Panc1 (cell line): ENCODE measurements at regions of chr19 and their contacts with region 1.

Region 1: DNA sequence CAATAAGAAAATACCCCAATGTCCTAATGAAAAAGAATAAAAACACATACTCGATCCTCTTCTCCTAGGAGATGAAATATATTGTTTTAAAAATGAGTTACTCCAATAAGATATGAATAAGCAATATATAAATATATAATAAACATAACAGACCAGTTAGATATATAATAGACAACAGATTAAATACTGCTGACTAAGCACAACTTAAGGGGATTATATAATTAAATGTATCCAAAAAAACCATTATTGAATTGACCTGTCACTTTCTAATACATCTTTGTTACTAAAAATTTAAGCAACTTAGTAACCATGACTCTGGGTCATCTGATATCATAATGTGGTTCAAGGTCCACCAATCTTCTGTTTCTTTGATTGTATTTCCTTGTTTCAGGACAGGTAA is 14.0 kb upstream of the ZNF780B start:
- DNase-seq: no peak
- ATAC-seq: no peak
- H3K4me3 ChIP-seq: no peak overlapping the region
- H3K27ac ChIP-seq: no peak overlapping the region
- H3K4me1 ChIP-seq: no peaks in the 10 kb centered on the region
- H3K27me3 ChIP-seq: no peaks in the 10 kb centered on the region
- CTCF ChIP-seq: no peak

Region 2: DNA sequence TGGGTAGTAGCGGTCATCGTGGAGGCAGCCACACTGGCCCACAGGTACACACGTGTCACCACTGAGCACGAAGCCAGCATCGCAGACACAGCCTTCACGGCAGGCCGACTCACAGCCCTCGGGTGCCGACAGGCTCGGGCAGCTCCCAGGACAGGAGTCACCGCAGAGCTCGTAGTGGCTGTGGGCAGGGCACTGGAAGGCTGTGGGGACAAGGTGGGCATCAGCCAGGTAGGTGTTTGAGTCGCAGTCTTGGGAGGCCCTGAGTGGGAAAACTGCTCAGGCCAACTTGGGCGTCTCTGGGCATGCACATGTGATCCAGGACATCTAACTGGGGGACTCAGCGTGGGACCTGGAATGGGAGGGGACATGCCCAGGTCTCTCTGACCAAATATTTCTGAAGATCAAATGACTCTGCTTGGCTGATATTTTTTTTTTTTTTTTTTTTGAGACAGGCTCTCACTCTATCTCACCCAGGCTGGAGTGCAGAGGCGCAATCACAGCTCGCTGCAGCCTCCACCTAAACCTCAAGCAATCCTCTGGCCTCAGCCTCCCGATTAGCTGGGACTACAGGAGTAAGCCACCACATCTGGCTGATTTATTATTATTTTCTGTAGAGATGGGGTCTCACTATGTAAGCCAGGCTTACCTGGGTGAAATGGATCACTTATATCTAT is 180.0 kb before region 1 on chr19:
- CTCF ChIA-PET with region 1: interaction called, 5 read pairs
- POLR2A ChIA-PET with region 1: interaction called, 12 read pairs
- in situ Hi-C with region 1: no loop called
- intact Hi-C with region 1: no loop called
- DNase-seq: no peak
- ATAC-seq: peak; percentile 0; the same call in 1 of the 2 replicates
- H3K4me3 ChIP-seq: no peak overlapping the region
- H3K27ac ChIP-seq: no peak overlapping the region
- H3K4me1 ChIP-seq: no peaks in the 10 kb centered on the region
- H3K27me3 ChIP-seq: no peaks in the 10 kb centered on the region
- CTCF ChIP-seq: no peak

Region 3: GRCh38 chr19:40013991-40014390 is 56.1 kb before region 1 on chr19:
- CTCF ChIA-PET with region 1: interaction called, 23 read pairs
- POLR2A ChIA-PET with region 1: interaction called, 3 read pairs
- in situ Hi-C with region 1: no loop called
- intact Hi-C with region 1: no loop called
- DNase-seq: no peak
- ATAC-seq: no peak
- H3K4me3 ChIP-seq: no peak overlapping the region
- H3K27ac ChIP-seq: no peak overlapping the region
- H3K4me1 ChIP-seq: no peaks in the 10 kb centered on the region
- H3K27me3 ChIP-seq: no peaks in the 10 kb centered on the region
- CTCF ChIP-seq: no peak

Region 4: DNA sequence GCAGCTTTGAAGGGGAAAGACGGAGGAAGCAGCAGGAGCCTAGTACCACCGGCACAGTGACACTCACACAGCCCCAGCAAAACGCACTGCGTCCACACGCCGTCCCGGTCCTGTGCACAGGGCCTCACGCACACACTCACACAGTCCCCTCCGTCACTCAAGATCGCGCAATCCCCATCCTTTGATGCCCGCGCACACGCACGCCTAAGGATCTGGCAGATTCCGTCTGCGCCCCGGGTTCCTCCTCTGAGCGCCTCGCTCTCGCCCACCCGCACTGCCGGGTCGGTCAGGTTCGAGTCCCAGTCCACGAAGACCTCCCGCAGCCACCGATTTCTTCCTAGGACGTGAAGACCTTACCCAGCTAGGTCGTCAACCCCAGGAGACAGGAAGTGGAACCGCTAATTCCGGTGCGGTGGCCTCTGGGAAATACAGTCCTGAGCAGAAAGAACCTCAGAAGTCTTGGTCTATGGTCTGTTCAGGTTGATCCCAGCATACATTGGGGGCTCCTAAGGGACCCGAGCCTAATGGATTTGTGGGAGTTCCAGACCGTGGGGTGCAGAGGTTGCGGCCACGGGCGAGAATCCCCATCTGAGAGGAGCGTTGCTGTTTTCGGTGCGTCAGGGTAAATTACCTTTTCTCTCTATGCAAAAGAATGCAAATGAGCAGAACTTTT is 14.1 kb before region 1 on chr19 and contains the start of gene ZNF780B:
- CTCF ChIA-PET with region 1: interaction called, 6 read pairs
- POLR2A ChIA-PET with region 1: interaction called, 27 read pairs
- in situ Hi-C with region 1: no loop called
- intact Hi-C with region 1: no loop called
- DNase-seq: peak; percentile 100
- ATAC-seq: peak; percentile 99
- H3K4me3 ChIP-seq: peak within 1 kb of the TSS; percentile 36 to 50
- H3K27ac ChIP-seq: peak within 1 kb of the TSS; percentile 78
- H3K4me1 ChIP-seq: peaks cover 16% of the 10 kb centered on the region
- H3K27me3 ChIP-seq: no peaks in the 10 kb centered on the region
- CTCF ChIP-seq: no peak
- total RNA-seq, gene ZNF780B: 237 TPM

Region 5: GRCh38 chr19:40084948-40085347 is 14.9 kb after region 1 on chr19:
- CTCF ChIA-PET with region 1: interaction called, 16 read pairs
- POLR2A ChIA-PET with region 1: interaction called, 3 read pairs
- in situ Hi-C with region 1: no loop called
- intact Hi-C with region 1: no loop called
- DNase-seq: no peak
- ATAC-seq: peak; percentile 47
- H3K4me3 ChIP-seq: peak overlapping the region in 1 of 2 experiments; percentile 0; a peak in 2 of 4 replicates
- H3K27ac ChIP-seq: peak overlapping the region; percentile 40
- H3K4me1 ChIP-seq: peaks cover 20% of the 10 kb centered on the region
- H3K27me3 ChIP-seq: no peaks in the 10 kb centered on the region
- CTCF ChIP-seq: no peak

Region 6: GRCh38 chr19:40104754-40105153 is 34.7 kb after region 1 on chr19:
- CTCF ChIA-PET with region 1: no interaction called
- POLR2A ChIA-PET with region 1: interaction called, 22 read pairs
- in situ Hi-C with region 1: no loop called
- intact Hi-C with region 1: no loop called
- DNase-seq: no peak
- ATAC-seq: peak; percentile 25; the same call in 1 of the 2 replicates
- H3K4me3 ChIP-seq: no peak overlapping the region
- H3K27ac ChIP-seq: no peak overlapping the region
- H3K4me1 ChIP-seq: no peaks in the 10 kb centered on the region
- H3K27me3 ChIP-seq: peaks cover 8% of the 10 kb centered on the region; the same call in 1 of the 2 replicates
- CTCF ChIP-seq: no peak

Region 7: GRCh38 chr19:40200341-40201099 is 130.5 kb after region 1 on chr19:
- CTCF ChIA-PET with region 1: no interaction called
- POLR2A ChIA-PET with region 1: no interaction called
- in situ Hi-C with region 1: no loop called
- intact Hi-C with region 1: no loop called
- DNase-seq: no peak
- ATAC-seq: peak; percentile 7; the same call in 1 of the 2 replicates
- H3K4me3 ChIP-seq: no peak overlapping the region
- H3K27ac ChIP-seq: no peak overlapping the region
- H3K4me1 ChIP-seq: no peaks in the 10 kb centered on the region
- H3K27me3 ChIP-seq: no peaks in the 10 kb centered on the region
- CTCF ChIP-seq: no peak

Region 8: DNA sequence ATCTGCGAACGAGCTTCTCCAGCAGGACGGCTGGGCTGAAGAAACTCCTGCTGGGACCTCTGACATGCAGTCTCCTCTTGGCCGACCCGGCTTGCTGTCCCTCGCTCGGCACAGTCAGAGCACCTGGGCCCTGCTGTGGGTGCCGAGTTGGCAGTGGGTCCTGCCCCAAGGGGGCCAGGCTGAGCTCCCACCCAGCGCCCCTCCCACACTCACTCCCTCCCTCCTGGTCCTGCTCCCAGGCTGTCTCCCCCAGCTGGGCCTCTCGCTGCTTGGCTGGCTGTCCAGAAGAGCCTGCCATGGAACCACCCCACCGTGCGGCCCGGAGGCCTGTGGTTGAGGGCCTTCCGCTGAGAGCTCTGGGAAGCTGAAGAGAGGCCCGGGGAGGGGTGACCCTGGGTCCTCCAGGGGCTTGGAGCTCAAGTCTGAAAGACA is 209.1 kb after region 1 on chr19:
- CTCF ChIA-PET with region 1: no interaction called
- POLR2A ChIA-PET with region 1: no interaction called
- in situ Hi-C with region 1: no loop called
- intact Hi-C with region 1: no loop called
- DNase-seq: no peak
- ATAC-seq: no peak
- H3K4me3 ChIP-seq: no peak overlapping the region
- H3K27ac ChIP-seq: no peak overlapping the region
- H3K4me1 ChIP-seq: peaks cover 67% of the 10 kb centered on the region
- H3K27me3 ChIP-seq: no peaks in the 10 kb centered on the region
- CTCF ChIP-seq: no peak

Region 9: DNA sequence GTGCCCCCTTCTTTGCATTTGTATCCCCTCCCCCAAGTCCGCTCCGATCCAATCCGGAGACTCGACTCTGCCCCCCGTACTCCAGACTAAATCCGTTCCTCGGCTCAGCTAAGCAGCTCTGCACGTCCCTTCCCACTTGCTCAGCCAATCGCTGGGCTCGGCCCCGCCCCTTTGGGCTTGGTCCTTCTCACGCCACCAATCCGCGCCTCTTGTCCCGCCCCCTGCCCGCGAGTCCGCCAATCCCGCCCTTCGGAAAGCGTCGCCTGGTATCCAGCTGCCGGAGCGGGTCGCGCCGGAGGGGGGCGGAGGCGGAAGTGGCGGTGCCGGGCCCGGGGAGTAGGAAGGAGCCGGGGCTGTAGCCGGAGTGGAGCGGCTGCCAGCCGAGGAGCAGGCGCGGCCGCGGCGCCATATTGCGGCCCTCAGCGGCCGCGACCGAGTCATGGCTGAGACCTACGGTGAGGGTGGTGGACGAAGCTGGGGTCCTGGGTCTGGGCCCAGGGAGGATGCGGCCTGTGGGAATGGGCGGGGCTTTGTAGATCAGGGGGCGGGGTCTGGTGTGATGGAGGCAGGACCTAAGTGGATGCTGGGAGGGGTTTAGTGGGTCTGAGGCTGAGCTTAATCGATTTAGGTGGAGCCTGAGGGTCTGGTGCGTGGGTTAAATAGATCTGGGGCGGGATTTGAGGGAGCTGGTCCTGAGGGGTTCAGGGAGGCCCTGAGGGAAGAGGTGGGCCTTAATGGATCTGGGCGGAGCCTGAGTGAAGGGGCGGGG is 708.1 kb after region 1 on chr19 and contains the start of gene RAB4B:
- CTCF ChIA-PET with region 1: no interaction called
- POLR2A ChIA-PET with region 1: no interaction called
- in situ Hi-C with region 1: no loop called
- intact Hi-C with region 1: no loop called
- DNase-seq: peak; percentile 83
- ATAC-seq: peak; percentile 94
- H3K4me3 ChIP-seq: peak within 1 kb of the TSS; percentile 56 to 87
- H3K27ac ChIP-seq: peak within 1 kb of the TSS; percentile 90
- H3K4me1 ChIP-seq: peaks cover 6% of the 10 kb centered on the region; the same call in 1 of the 2 replicates
- H3K27me3 ChIP-seq: no peaks in the 10 kb centered on the region
- CTCF ChIP-seq: no peak
- total RNA-seq, gene RAB4B: 24.8 TPM